ENCODE measurements at regions of chr12 and their contacts with region 1.

Region 1: DNA sequence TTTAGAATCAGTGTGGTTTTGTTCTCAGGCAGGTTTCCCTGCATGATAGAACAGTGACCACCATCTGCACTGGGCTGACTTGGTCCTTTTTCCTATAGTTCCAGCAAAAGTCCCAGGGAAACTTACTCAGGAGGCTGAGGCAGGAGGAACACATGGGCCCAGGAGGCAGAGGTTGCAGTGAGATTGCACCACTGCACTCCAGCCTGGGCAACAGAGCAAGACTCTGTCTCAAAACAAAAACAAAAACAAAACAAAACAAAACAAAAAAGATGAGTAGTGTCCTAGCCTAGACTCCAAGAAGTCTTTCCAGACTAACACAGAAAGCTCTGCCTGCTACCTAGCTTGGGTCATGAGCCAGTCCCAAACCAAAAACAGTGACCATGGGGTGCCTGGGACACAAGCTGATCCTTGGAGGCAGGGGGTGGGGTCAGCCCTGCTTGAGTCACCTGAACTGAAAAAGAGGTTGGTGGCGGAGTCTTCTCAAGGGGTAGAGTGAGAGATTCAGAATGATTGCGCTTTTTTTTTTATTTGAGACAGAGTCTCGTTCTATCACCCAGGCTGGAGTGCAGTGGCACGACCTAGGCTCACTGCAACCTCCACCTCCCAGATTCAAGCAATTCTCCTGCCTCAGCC is 7.4 kb upstream of the SLC11A2 start:
- DNase-seq: no peak
- H3K4me3 ChIP-seq: no peak overlapping the region
- H3K27ac ChIP-seq: no peak overlapping the region
- H3K4me1 ChIP-seq: no peaks in the 10 kb centered on the region
- H3K27me3 ChIP-seq: no peaks in the 10 kb centered on the region
- CTCF ChIP-seq: no peak
- POLR2A ChIP-seq: no peak

Region 2: GRCh38 chr12:49598527-49598926 is 1435.0 kb before region 1 on chr12:
- intact Hi-C with region 1: no loop called
- DNase-seq: no peak
- H3K4me3 ChIP-seq: no peak overlapping the region
- H3K27ac ChIP-seq: no peak overlapping the region
- H3K4me1 ChIP-seq: no peaks in the 10 kb centered on the region
- H3K27me3 ChIP-seq: no peaks in the 10 kb centered on the region
- CTCF ChIP-seq: no peak
- POLR2A ChIP-seq: no peak

Region 3: DNA sequence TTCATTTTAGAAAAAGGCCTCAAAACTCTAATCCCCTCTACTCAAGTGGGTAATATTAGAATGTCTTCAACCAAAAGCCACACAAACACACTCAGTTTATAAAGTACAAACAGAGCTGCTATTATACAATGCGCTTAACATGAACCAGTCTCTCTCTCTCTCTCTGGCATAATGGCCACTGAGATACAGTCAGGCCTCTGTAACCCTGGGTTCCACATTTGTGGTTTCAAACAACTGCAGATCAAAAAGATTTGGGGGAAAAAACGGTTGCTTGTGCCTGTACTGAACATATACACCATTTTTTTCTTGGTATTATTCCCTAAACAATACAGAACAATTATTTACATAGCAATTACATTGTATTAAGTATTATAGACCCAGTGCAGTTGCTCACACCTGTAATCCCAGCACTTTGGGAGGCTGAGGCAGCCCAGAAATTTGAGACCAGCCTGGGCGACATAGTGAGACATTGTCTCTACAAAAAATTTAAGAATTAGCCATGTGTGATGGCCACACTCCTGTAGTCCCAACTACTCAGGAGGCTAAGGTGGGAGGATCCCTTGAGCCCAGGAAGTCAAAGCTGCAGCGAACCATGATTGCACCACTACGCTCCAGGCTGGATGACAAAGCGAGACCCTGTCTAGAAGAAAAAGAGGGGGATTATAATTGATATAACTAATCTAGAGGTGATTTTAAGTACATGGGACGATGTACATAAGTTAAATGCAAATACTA is 13.0 kb before region 1 on chr12:
- intact Hi-C with region 1: no loop called
- DNase-seq: no peak
- H3K4me3 ChIP-seq: no peak overlapping the region
- H3K27ac ChIP-seq: peak overlapping the region; percentile 22 to 99
- H3K4me1 ChIP-seq: peaks cover 0 to 8% of the 10 kb centered on the region in 2 donors
- H3K27me3 ChIP-seq: no peaks in the 10 kb centered on the region
- CTCF ChIP-seq: no peak
- POLR2A ChIP-seq: no peak

Region 4: GRCh38 chr12:51047655-51048540 is 14.3 kb after region 1 on chr12 and contains the start of gene LETMD1:
- intact Hi-C with region 1: no loop called
- DNase-seq: peak; percentile 90 to 96
- H3K4me3 ChIP-seq: peak within 1 kb of the TSS; percentile 69 to 85 (median 73)
- H3K27ac ChIP-seq: peak within 1 kb of the TSS; percentile 95 to 96
- H3K4me1 ChIP-seq: peaks cover 5 to 8% of the 10 kb centered on the region in 2 donors
- H3K27me3 ChIP-seq: no peaks in the 10 kb centered on the region
- CTCF ChIP-seq: peak; percentile 75 to 94 (median 94)
- POLR2A ChIP-seq: peak; percentile 30
- total RNA-seq, gene LETMD1: 63.6 to 92.0 (median 82.1) TPM

Region 5: DNA sequence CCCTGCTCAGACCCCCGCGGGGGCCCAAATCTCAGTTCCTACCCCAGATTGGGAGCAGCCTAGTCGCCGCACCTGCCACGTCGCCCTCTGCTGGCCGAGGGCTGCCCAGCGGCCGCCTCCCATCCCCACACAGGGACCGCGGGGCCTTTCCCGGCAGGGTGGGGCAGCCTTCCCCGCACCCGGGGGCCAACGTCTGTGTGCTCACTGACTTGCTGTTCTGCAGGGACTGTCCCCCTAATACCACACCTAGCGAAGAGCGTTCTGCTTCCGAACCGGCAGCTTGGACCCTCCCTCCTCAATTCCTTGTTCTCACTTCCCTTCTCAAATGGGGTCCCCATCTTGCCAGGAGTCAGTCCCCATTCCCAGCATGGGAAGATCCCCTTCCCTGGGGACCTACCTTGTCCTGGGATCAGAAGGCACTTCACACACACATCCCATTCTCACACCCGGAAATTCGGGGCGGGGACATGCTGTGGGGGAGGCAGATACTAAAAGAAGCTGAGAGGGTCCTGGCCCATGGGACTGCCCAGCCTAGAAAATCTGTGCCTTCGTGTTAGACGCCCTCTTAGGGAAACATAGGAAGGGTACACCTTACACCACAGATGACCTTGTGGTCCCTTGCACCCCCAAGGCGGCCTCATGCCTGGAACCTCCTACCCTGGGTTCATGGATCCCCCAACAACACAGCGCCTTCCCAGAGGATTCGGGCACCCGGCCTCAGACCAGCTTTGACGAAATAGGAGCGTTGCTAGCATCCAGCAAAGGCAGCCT is 890.1 kb after region 1 on chr12:
- intact Hi-C with region 1: loop called (anchors 5 kb)
- DNase-seq: peak in 1 of 2 donors; percentile 56
- H3K4me3 ChIP-seq: peak overlapping the region; percentile 7 to 47 (median 17)
- H3K27ac ChIP-seq: peak overlapping the region; percentile 68 to 89
- H3K4me1 ChIP-seq: peaks cover 0 to 3% of the 10 kb centered on the region in 2 donors
- H3K27me3 ChIP-seq: no peaks in the 10 kb centered on the region
- CTCF ChIP-seq: peak in 2 of 3 donors; percentile 40 to 67
- POLR2A ChIP-seq: no peak

Measured in breast epithelium (tissue), 4 donors.